ENCODE measurements at regions of chr1 and their contacts with region 1.

Region 1: DNA sequence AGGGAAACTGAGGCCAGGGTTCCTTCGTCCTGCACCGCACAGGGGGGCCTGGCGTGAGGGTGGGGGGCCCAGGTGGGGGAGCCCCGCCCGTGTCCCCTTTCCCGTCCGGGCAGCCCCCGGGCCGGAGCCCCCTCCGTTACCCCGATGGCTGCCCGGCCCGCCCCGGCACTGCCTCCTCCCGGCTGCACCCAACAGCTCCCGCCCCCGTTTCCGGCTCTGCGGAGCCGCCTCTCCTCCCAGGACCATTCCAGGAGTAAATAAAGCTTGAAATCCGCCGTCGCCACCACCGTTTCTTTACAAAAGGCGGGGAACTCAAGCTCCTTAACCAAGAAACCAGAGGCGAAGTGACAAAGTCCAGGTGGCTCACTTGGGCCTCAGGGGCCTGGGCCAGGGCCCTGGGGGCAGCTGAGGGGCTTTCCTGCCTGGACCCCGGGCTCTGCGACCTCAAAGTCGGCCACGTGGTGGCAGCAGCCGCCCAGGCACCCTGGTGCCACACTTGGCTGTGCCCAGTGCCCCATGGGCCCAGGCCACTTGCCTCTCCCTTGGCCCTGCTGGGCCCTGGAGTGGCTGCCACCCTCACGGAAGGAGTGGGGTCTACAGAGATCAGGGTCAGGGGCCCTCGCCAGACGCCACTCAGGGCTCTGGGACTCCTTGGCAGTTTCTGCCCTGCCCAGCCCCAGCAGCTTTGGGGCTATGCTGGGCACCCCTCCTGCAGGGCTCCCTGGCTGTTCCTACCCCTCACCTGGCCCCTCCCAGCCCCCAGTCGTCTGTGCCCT is 514 bp upstream of the FAAP20 start:
- DNase-seq: peak; percentile 88
- H3K4me3 Mint-ChIP-seq: peak overlapping the region; percentile 84
- H3K27ac Mint-ChIP-seq: peak overlapping the region; percentile 90
- H3K4me1 Mint-ChIP-seq: peaks cover 20% of the 10 kb centered on the region
- H3K27me3 Mint-ChIP-seq: no peaks in the 10 kb centered on the region

Region 2: GRCh38 chr1:1680912-1681273 is 514.2 kb before region 1 on chr1:
- intact Hi-C with region 1: no loop called
- DNase-seq: no peak
- H3K4me3 Mint-ChIP-seq: no peak overlapping the region
- H3K27ac Mint-ChIP-seq: no peak overlapping the region
- H3K4me1 Mint-ChIP-seq: peaks cover 17% of the 10 kb centered on the region
- H3K27me3 Mint-ChIP-seq: no peaks in the 10 kb centered on the region

Region 3: DNA sequence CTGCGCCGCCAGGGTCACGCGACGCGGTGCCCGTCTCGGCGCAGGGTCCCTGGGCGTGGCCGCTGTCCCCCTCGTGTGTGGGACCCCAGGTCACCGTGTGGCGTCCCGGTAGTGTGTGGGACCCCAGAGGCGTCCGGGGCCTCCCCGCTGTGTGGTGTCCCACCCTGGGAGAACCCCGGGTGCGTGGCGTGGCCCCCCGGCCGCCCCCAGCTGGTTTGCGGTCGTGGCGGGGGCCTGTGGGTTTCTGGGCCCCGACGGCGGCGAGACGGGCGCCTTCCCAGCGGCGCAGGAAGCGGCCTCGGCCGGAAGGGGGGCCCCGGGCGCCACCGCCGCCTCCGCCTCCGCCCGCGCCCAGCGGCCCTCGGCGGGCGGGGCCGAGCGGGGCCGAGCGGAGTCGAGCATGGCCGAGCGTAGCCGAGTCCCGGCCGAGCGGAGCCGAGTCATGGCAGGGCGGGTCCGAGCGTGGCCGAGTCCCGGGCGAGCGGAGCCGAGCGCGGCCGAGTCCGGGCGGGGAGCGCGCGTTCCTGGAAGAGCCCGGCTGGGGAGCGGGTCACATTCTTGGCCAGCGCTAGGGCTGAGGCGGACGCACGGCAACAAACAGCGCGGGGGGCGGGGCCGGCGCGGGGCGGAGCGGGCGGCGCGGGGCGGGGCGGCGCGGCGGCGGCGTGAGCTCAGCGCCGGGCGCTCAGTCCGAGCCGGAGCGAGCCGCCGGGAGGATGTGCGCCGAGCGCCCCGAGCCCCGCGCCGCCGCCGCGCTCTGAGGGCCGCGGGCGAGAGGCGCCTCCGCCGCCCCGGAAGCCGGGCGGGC is 32.5 kb after region 1 on chr1:
- intact Hi-C with region 1: loop called (anchors 1 kb)
- DNase-seq: peak; percentile 96
- H3K4me3 Mint-ChIP-seq: peak overlapping the region; percentile 73
- H3K27ac Mint-ChIP-seq: peak overlapping the region; percentile 80
- H3K4me1 Mint-ChIP-seq: peaks cover 26% of the 10 kb centered on the region
- H3K27me3 Mint-ChIP-seq: peaks cover 13% of the 10 kb centered on the region

Region 4: GRCh38 chr1:2314803-2315673 is 120.0 kb after region 1 on chr1:
- intact Hi-C with region 1: loop called (anchors 1 kb)
- DNase-seq: peak; percentile 45
- H3K4me3 Mint-ChIP-seq: no peak overlapping the region
- H3K27ac Mint-ChIP-seq: peak overlapping the region; percentile 63
- H3K4me1 Mint-ChIP-seq: no peaks in the 10 kb centered on the region
- H3K27me3 Mint-ChIP-seq: no peaks in the 10 kb centered on the region

Region 5: DNA sequence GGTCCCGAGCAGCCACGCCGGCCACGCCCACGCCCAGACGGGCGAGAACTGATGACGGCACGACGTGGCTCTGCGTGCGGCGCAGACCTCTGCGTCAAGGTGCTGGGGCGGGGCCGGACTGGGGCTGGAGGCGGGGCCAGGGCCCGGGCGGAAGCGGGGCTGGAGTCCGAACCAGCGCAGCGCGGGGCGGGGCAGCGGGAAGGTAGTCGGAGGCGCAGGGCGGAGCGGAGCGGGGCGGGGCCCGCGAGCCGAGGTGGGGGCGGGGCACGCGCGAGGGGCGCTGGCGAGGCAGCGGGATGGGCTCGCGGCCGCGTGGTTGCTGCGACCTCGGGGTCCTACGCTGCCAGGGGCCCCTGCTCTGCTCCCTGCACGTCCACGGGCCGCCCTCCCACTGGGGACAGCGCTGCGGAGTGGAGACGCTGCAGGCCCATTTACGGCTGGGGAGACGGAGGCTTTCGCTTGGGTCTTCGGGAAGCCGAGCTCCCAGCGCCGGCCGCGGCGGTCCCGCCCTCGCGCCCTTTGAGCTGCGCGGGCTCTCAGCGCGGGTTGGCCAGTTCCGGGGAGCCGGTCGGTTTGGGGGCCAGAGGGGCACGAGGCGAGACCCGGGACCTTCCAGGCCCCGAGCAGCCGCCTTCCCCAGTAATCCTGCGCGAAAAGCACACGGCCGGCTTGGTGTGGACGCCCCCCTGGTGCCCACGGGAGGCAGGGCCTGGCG is 217.6 kb after region 1 on chr1 and contains the start of gene PEX10:
- intact Hi-C with region 1: loop called (anchors 1 kb)
- DNase-seq: peak; percentile 99
- H3K4me3 Mint-ChIP-seq: peak within 1 kb of the TSS; percentile 90
- H3K27ac Mint-ChIP-seq: peak within 1 kb of the TSS; percentile 89
- H3K4me1 Mint-ChIP-seq: peaks cover 38% of the 10 kb centered on the region
- H3K27me3 Mint-ChIP-seq: no peaks in the 10 kb centered on the region
- total RNA-seq, gene PEX10: 22.4 and 24.0 TPM in 2 replicates

Region 6: GRCh38 chr1:2642560-2643413 is 447.7 kb after region 1 on chr1:
- intact Hi-C with region 1: loop called (anchors 5 kb)
- DNase-seq: peak; percentile 93
- H3K4me3 Mint-ChIP-seq: peak overlapping the region; percentile 85
- H3K27ac Mint-ChIP-seq: peak overlapping the region; percentile 93
- H3K4me1 Mint-ChIP-seq: no peaks in the 10 kb centered on the region
- H3K27me3 Mint-ChIP-seq: no peaks in the 10 kb centered on the region